SK-N-SH (cell line): ENCODE measurements at regions of chr6 and their contacts with region 1.

Region 1: DNA sequence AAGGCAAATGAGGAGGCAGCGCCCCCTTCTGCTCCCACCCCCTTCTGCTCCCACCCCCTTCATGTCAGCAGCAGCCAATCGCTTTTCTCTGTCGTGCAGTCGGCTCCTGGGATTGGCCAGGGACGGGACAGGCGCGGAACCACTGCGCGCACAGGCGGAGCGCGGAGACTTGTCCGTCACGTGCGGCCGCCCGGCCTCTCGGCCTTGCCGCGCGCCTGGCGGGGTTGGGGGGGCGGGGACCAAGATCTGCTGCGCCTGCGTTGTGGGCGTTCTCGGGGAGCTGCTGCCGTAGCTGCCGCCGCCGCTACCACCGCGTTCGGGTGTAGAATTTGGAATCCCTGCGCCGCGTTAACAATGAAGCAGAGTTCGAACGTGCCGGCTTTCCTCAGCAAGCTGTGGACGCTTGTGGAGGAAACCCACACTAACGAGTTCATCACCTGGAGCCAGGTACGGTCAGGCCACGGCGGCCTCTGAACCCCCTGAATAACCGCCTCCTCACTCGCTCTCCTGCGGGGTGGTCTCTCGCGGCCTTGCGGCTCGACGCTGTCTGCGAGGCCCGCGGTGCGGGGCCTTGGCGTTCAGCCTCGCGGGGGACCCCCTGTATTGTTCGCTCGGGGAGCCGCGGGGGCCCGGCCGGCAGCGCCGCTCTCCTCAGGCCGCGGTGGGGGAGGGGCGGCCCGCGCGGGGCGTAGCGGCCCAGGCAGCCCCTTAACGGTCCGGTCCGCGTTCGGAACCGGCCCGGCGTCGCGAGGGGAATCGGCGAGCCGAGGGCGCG is at the start of gene HSF2:
- DNase-seq: peak; percentile 94
- H3K4me3 ChIP-seq: peak within 1 kb of the TSS; percentile 97 to 99
- H3K27ac ChIP-seq: peak within 1 kb of the TSS; percentile 73 to 88
- H3K4me1 ChIP-seq: peaks cover 0 to 8% of the 10 kb centered on the region in 2 experiments; a peak in 2 of 4 replicates
- H3K27me3 ChIP-seq: no peaks in the 10 kb centered on the region
- CTCF ChIP-seq: no peak
- EP300 ChIP-seq: no peak
- RAD21 ChIP-seq: no peak
- polyA plus RNA-seq, gene HSF2: 22.2 and 28.0 TPM in 2 replicates

Region 2: DNA sequence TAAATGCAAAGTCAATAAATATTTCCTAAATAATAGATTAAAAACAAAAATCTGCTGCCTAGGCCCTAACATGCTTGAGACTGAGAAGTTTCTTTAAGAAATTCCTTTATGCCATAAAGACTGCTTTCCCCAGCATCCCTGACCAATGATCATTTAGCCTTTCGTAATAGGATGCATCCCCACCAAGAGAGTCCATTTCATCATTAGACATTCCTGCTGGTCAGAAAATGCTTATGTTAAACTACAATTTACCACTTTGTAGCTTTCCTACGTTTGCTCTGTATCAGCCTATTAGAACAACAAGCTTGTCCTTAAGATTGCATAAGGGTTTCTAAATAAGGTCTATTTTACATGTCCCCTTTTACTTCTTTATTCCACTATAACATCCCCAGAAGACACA is 59.9 kb before region 1 on chr6:
- CTCF ChIA-PET with region 1: no interaction called
- POLR2A ChIA-PET with region 1: no interaction called
- DNase-seq: no peak
- H3K4me3 ChIP-seq: no peak overlapping the region
- H3K27ac ChIP-seq: no peak overlapping the region
- H3K4me1 ChIP-seq: no peaks in the 10 kb centered on the region
- H3K27me3 ChIP-seq: no peaks in the 10 kb centered on the region
- CTCF ChIP-seq: no peak
- EP300 ChIP-seq: no peak
- RAD21 ChIP-seq: no peak

Region 3: DNA sequence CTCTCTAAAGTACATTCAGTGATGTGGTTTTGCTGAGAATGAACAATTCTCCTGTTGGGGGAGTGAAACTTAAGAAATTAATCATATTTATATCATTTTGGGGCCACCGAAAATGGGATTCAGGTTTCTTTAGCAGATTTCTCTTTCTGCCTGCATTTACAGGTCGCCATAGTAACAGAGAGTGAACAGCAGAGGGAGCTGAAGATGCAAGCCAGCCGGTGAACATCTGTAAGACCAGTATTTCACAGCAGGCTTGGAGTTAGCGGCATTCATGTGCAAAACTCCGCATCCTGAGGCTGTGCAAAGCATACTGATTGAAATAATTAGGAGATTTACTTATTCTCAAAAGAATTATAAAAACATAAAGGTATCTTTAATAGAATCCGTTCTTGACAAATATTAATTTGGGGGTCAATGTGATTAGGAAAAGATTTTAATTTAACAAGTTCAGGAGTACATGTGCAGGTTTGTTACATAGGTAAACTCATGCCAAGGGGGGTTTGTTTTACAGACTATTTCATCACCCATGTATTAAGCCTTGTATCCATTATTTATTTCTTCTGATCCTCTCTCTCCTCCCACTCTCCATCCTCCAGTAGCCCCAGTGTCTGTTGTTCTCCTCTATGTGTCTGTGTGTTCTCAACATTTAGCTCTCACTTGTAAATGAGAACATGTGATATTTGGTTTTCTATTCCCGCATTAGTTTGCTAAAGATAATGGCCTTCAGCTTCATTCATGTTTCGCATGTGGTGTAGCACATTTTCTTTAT is 17.9 kb before region 1 on chr6:
- CTCF ChIA-PET with region 1: interaction called, 10 read pairs
- POLR2A ChIA-PET with region 1: no interaction called
- DNase-seq: peak; percentile 41
- H3K4me3 ChIP-seq: no peak overlapping the region
- H3K27ac ChIP-seq: no peak overlapping the region
- H3K4me1 ChIP-seq: no peaks in the 10 kb centered on the region
- H3K27me3 ChIP-seq: no peaks in the 10 kb centered on the region
- CTCF ChIP-seq: peak; percentile 77
- EP300 ChIP-seq: no peak
- RAD21 ChIP-seq: peak; percentile 79